ENCODE measurements at regions of chr1 and their contacts with region 1.

Region 1: GRCh38 chr1:161225534-161226319 is at the start of gene TOMM40L:
- DNase-seq: peak; percentile 94
- H3K4me3 Mint-ChIP-seq: peak within 1 kb of the TSS; percentile 95
- H3K27ac Mint-ChIP-seq: peak within 1 kb of the TSS; percentile 93
- H3K4me1 Mint-ChIP-seq: peaks cover 44% of the 10 kb centered on the region
- H3K27me3 Mint-ChIP-seq: no peaks in the 10 kb centered on the region
- total RNA-seq, gene TOMM40L: 16.7 to 17.3 TPM

Region 2: DNA sequence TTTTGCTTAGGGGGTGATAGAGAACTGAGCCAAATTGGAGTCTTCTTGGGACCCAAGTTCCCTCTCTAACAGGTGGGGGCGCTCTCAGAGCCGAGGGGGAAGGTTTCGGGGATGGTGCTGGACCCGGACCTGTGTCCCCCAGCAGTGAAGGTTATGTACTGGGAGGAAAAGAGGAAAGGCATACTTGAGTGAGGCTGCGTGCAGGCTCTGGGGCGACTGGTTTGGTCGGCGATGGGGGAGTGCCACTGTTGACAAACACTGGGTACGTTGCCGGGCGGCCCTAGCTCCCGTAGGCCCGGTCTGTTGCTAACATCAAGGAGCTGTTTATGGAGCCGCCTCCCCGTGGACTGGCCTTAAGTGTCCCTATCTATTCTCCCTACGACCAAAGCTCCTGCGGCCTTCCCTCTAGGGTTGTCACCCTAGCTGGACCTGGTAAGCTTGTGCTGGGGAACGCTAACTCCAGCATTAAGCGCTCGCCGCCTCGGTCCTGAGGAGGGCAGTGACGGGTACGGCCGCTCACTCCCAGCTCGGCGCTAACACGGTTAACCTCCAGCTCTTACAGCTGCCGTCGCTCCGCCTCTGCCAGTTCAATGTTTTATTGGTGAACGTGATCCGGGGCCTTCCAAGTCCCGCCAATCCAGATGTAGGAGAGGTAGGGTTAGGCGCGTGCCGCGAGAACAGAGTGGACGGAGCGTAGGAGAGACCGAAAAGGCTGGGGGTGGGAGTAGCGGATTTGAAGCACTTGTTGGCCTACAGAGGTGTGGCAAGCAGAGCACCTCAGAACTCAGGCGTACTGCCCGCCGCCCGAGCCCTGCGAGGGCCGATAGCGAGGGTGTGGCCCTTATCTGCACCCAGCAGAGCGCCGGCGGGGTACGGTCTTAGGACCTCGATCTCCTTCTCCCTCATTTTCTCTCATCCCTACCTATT is 59.7 kb before region 1 on chr1 and contains the start of gene PPOX:
- CTCF ChIA-PET with region 1: interaction called, 12 read pairs
- POLR2A ChIA-PET with region 1: interaction called, 4 read pairs
- DNase-seq: peak; percentile 98
- H3K4me3 Mint-ChIP-seq: peak within 1 kb of the TSS; percentile 85
- H3K27ac Mint-ChIP-seq: peak within 1 kb of the TSS; percentile 97
- H3K4me1 Mint-ChIP-seq: peaks cover 50% of the 10 kb centered on the region
- H3K27me3 Mint-ChIP-seq: no peaks in the 10 kb centered on the region
- total RNA-seq, gene PPOX: 33.6 to 40.7 TPM

Region 3: GRCh38 chr1:161201828-161202725 is 23.6 kb before region 1 on chr1 and contains the start of gene NDUFS2:
- CTCF ChIA-PET with region 1: interaction called, 19 read pairs
- POLR2A ChIA-PET with region 1: interaction called, 6 read pairs
- DNase-seq: peak; percentile 98
- H3K4me3 Mint-ChIP-seq: peak within 1 kb of the TSS; percentile 96
- H3K27ac Mint-ChIP-seq: peak within 1 kb of the TSS; percentile 98
- H3K4me1 Mint-ChIP-seq: peaks cover 75% of the 10 kb centered on the region
- H3K27me3 Mint-ChIP-seq: no peaks in the 10 kb centered on the region
- total RNA-seq, gene NDUFS2: 74.2 to 82.1 TPM

Region 4: DNA sequence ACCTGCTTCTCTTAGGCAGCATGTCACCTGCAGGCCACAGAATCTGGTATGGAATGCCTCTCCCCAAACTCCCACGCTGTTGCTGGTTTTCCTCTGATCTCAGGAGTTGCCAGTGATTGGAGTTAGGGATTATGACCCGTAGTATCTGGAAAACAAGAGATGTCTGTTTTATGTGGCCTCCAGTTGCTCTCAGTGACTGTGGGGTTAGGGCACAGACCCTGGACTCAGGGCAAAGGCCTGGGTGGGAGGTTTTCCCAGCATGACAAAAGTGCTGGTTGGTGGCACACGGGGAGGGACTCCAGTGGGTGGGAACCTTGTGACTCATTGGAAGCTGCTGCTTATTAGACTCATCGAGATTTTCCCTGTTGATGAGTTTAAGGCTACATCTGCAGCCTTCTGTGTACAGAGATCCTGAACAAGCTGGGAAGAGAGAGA is 12.3 kb after region 1 on chr1 and contains the start of gene NR1I3:
- CTCF ChIA-PET with region 1: interaction called, 14 read pairs
- POLR2A ChIA-PET with region 1: no interaction called
- DNase-seq: no peak
- H3K4me3 Mint-ChIP-seq: no peak within 1 kb of the TSS
- H3K27ac Mint-ChIP-seq: no peak within 1 kb of the TSS
- H3K4me1 Mint-ChIP-seq: no peaks in the 10 kb centered on the region
- H3K27me3 Mint-ChIP-seq: peaks cover 17% of the 10 kb centered on the region
- total RNA-seq, gene NR1I3: not detected

Region 5: DNA sequence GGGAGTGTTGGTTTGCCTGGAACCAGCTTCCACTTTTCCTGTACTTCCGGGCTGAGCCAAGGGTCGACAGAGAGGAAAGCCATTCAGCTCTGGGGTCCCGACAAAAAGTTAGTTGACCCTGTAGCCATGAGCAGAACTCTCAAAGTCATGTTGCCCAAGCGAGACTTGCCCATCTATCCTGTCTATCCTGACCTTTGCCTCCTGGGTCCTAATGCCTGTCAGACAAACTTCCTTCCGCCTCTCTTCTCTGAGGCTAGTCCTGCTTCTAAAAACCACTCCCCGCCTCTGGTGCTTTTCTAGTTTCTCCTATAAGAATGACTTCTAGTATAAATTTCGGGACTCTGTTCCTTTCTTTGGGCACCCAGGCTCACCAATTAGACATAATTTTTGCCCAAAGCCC is 25.1 kb after region 1 on chr1:
- CTCF ChIA-PET with region 1: interaction called, 21 read pairs
- POLR2A ChIA-PET with region 1: no interaction called
- DNase-seq: no peak
- H3K4me3 Mint-ChIP-seq: no peak overlapping the region
- H3K27ac Mint-ChIP-seq: no peak overlapping the region
- H3K4me1 Mint-ChIP-seq: no peaks in the 10 kb centered on the region
- H3K27me3 Mint-ChIP-seq: peaks cover 12% of the 10 kb centered on the region

Region 6: GRCh38 chr1:161285521-161285920 is 59.8 kb after region 1 on chr1:
- CTCF ChIA-PET with region 1: no interaction called
- POLR2A ChIA-PET with region 1: no interaction called
- DNase-seq: no peak
- H3K4me3 Mint-ChIP-seq: no peak overlapping the region
- H3K27ac Mint-ChIP-seq: peak overlapping the region; percentile 60
- H3K4me1 Mint-ChIP-seq: no peaks in the 10 kb centered on the region
- H3K27me3 Mint-ChIP-seq: peaks cover 11% of the 10 kb centered on the region

Region 7: GRCh38 chr1:161389691-161390558 is 164.2 kb after region 1 on chr1:
- CTCF ChIA-PET with region 1: interaction called, 38 read pairs
- POLR2A ChIA-PET with region 1: no interaction called
- DNase-seq: peak; percentile 97
- H3K4me3 Mint-ChIP-seq: peak overlapping the region; percentile 77
- H3K27ac Mint-ChIP-seq: peak overlapping the region; percentile 94
- H3K4me1 Mint-ChIP-seq: peaks cover 47% of the 10 kb centered on the region
- H3K27me3 Mint-ChIP-seq: no peaks in the 10 kb centered on the region

Region 8: DNA sequence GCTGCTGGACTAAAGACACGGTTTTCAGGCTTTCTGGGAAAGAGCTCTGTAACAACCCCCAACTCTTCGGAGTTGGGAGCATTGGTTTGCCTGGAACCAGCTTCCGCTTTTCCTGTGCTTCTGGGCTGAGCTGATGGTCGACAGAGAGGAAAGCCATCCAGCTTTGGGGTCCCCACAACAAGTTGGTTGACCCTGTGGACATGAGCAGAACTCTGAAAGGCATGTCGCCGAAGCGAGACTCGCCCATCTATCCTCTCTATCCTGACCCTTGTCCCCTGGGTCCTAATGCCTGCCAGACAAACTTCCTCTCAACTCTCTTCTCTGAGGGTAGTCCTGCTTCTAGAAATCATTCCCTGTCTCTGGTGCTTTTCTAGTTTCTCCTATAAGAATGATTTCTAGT is 247.6 kb after region 1 on chr1:
- CTCF ChIA-PET with region 1: no interaction called
- POLR2A ChIA-PET with region 1: no interaction called
- DNase-seq: no peak
- H3K4me3 Mint-ChIP-seq: no peak overlapping the region
- H3K27ac Mint-ChIP-seq: no peak overlapping the region
- H3K4me1 Mint-ChIP-seq: peaks cover 6% of the 10 kb centered on the region
- H3K27me3 Mint-ChIP-seq: peaks cover 31% of the 10 kb centered on the region